ENCODE measurements at regions of chr20 and their contacts with region 1.

Region 1: DNA sequence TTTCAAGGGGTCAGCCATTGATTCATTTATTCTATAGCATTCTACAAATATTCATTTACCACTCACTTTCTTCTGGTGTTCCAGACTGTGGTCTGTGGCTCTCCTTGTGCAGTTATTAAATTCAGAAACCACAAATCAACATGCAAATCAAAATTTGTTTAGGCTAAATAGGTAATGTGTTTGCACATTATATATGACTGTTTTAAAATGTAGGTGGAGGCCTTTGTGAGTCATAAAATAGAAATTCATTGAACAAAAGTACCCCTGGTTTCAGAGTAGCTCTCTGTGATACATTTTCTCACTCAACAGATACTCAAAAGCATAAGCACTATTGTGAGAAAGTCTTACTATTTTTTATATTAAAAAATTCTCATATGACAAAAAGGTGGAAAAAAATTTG is 385.5 kb upstream of the TSHZ2 start:
- DNase-seq: no peak
- ATAC-seq: no peak
- H3K4me3 ChIP-seq: no peak overlapping the region
- H3K4me3 Mint-ChIP-seq: no peak overlapping the region
- H3K27ac ChIP-seq: no peak overlapping the region
- H3K27ac Mint-ChIP-seq: peak overlapping the region in 1 of 9 donors; percentile 13
- H3K4me1 ChIP-seq: no peaks in the 10 kb centered on the region
- H3K4me1 Mint-ChIP-seq: no peaks in the 10 kb centered on the region
- H3K27me3 ChIP-seq: no peaks in the 10 kb centered on the region
- H3K27me3 Mint-ChIP-seq: no peaks in the 10 kb centered on the region

Region 2: GRCh38 chr20:52529826-52530225 is 56.8 kb before region 1 on chr20:
- CTCF ChIA-PET with region 1: no interaction called
- POLR2A ChIA-PET with region 1: no interaction called
- intact Hi-C with region 1: loop called in 1 of 2 experiments (anchors 10 kb)
- DNase-seq: no peak
- ATAC-seq: no peak
- H3K4me3 ChIP-seq: no peak overlapping the region
- H3K4me3 Mint-ChIP-seq: no peak overlapping the region
- H3K27ac ChIP-seq: no peak overlapping the region
- H3K27ac Mint-ChIP-seq: no peak overlapping the region
- H3K4me1 ChIP-seq: no peaks in the 10 kb centered on the region
- H3K4me1 Mint-ChIP-seq: peaks cover 0 to under 1% (median 0%) of the 10 kb centered on the region in 7 donors
- H3K27me3 ChIP-seq: no peaks in the 10 kb centered on the region
- H3K27me3 Mint-ChIP-seq: peaks cover 0 to 2% (median 0%) of the 10 kb centered on the region in 5 donors

Measured in naive thymus-derived CD4-positive, alpha-beta T cell (primary cell).